BJ (cell line): ENCODE measurements at regions of chr7 and their contacts with region 1.

Region 1: GRCh38 chr7:42283553-42283952 is 46.5 kb upstream of the GLI3 start:
- DNase-seq: no peak
- H3K4me3 ChIP-seq: no peak overlapping the region
- H3K27me3 ChIP-seq: peaks cover 8% of the 10 kb centered on the region; the same call in 1 of the 2 replicates
- CTCF ChIP-seq: no peak

Region 2: GRCh38 chr7:42097757-42098191 is 185.8 kb before region 1 on chr7:
- CTCF ChIA-PET with region 1: no interaction called
- POLR2A ChIA-PET with region 1: no interaction called
- DNase-seq: peak; percentile 34
- H3K4me3 ChIP-seq: no peak overlapping the region
- H3K27me3 ChIP-seq: no peaks in the 10 kb centered on the region
- CTCF ChIP-seq: peak; percentile 27; the same call in 1 of the 2 replicates

Region 3: GRCh38 chr7:42272793-42273665 is 10.5 kb before region 1 on chr7:
- CTCF ChIA-PET with region 1: interaction called, 11 read pairs
- POLR2A ChIA-PET with region 1: no interaction called
- DNase-seq: no peak
- H3K4me3 ChIP-seq: no peak overlapping the region
- H3K27me3 ChIP-seq: no peaks in the 10 kb centered on the region
- CTCF ChIP-seq: peak; percentile 70